Activated CD4-positive, alpha-beta memory T cell treated with anti-CD3 and anti-CD28 coated beads for 36 hours (primary cell): ENCODE measurements at regions of chr12 and their contacts with region 1.

Region 1: DNA sequence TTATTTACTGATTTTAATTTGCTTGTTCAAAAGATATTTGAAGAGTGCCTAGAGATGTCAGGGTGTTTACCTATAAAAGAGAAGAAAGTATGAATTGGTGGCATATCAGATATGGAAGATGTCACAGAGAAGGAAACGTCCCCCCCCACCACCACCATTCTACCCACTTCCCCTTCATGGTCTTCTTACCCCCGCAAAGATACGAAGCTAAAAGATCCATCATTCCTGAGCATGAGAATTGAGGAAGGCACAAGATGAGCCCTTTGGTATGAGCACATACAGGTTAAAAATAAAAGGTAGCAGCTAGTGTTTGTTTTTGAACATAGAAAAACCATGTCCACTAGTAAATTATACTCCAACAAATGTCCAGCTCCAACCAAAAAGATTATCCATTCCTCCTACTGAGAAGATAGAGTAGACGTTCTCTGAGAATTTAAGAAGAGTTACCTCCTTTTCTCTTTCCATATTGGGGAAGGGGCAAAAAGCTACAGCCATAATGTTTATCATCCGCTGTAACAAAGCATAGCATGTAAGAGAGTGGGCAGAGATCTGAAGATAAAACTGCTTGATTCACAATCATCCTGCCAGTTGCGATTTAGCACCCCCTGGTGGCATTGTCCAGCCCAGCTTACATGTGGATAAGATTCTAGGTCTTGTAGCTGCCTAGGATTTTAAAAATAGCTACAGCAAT is 29.1 kb downstream of the NFYB start:
- DNase-seq: peak; percentile 91
- H3K4me3 Mint-ChIP-seq: no peak overlapping the region
- H3K27ac Mint-ChIP-seq: no peak overlapping the region
- H3K4me1 Mint-ChIP-seq: peaks cover 11% of the 10 kb centered on the region
- H3K27me3 Mint-ChIP-seq: no peaks in the 10 kb centered on the region

Region 2: GRCh38 chr12:103884316-103884715 is 224.6 kb before region 1 on chr12:
- CTCF ChIA-PET with region 1: interaction called, 44 read pairs
- POLR2A ChIA-PET with region 1: no interaction called
- intact Hi-C with region 1: loop called (anchors 1 kb)
- DNase-seq: peak; percentile 57
- H3K4me3 Mint-ChIP-seq: no peak overlapping the region
- H3K27ac Mint-ChIP-seq: no peak overlapping the region
- H3K4me1 Mint-ChIP-seq: peaks cover 16% of the 10 kb centered on the region
- H3K27me3 Mint-ChIP-seq: no peaks in the 10 kb centered on the region

Region 3: DNA sequence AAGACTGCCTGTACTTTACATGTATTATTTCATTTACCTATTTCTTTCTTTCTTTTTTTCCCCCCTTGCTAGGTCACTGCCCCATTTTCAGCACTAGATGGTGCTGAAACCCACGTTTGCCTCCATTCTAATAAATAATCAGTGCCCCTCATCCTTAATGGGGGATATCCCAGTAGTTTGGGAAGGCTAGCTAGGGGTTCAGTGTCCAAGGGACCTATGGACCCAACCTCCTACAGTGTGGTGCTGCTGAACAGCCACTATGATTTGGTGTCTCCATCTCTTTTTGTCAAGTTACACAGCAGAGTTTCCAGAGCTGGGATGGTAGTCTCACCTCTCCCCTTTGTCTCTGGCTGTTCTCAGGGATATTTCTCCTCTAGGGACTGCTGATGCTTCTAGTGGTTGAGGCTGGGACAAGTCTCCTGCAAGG is 51.1 kb before region 1 on chr12:
- CTCF ChIA-PET with region 1: interaction called, 156 read pairs
- POLR2A ChIA-PET with region 1: no interaction called
- intact Hi-C with region 1: loop called (anchors 1 kb)
- DNase-seq: no peak
- H3K4me3 Mint-ChIP-seq: no peak overlapping the region
- H3K27ac Mint-ChIP-seq: no peak overlapping the region
- H3K4me1 Mint-ChIP-seq: no peaks in the 10 kb centered on the region
- H3K27me3 Mint-ChIP-seq: peaks cover 24% of the 10 kb centered on the region

Region 4: DNA sequence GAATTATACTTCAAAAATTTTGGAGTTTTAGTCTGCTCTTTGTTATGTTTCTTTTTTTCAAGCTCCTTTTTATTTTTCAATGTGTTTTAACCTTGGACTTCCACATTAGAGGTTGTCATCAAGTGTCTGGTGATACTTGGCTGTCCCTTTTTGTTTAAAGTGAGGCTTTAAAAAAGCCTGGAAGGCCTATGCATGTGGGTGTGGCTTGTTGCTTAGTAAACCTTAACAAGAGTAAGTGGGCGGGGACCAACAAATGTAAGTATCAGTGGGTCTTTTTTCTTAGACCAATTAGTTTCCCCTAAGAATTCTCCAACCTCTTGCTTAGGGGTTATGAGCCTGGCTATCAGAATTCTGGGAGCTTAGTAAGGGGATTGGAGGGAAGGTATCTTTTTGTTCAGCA is 18.2 kb before region 1 on chr12:
- CTCF ChIA-PET with region 1: interaction called, 49 read pairs
- POLR2A ChIA-PET with region 1: no interaction called
- intact Hi-C with region 1: no loop called
- DNase-seq: no peak
- H3K4me3 Mint-ChIP-seq: no peak overlapping the region
- H3K27ac Mint-ChIP-seq: no peak overlapping the region
- H3K4me1 Mint-ChIP-seq: peaks cover 12% of the 10 kb centered on the region
- H3K27me3 Mint-ChIP-seq: no peaks in the 10 kb centered on the region

Region 5: GRCh38 chr12:104130760-104131159 is 21.9 kb after region 1 on chr12:
- CTCF ChIA-PET with region 1: interaction called, 36 read pairs
- POLR2A ChIA-PET with region 1: no interaction called
- intact Hi-C with region 1: no loop called
- DNase-seq: no peak
- H3K4me3 Mint-ChIP-seq: no peak overlapping the region
- H3K27ac Mint-ChIP-seq: no peak overlapping the region
- H3K4me1 Mint-ChIP-seq: peaks cover 15% of the 10 kb centered on the region
- H3K27me3 Mint-ChIP-seq: no peaks in the 10 kb centered on the region